ENCODE measurements at regions of chr15 and their contacts with region 1.

Region 1: DNA sequence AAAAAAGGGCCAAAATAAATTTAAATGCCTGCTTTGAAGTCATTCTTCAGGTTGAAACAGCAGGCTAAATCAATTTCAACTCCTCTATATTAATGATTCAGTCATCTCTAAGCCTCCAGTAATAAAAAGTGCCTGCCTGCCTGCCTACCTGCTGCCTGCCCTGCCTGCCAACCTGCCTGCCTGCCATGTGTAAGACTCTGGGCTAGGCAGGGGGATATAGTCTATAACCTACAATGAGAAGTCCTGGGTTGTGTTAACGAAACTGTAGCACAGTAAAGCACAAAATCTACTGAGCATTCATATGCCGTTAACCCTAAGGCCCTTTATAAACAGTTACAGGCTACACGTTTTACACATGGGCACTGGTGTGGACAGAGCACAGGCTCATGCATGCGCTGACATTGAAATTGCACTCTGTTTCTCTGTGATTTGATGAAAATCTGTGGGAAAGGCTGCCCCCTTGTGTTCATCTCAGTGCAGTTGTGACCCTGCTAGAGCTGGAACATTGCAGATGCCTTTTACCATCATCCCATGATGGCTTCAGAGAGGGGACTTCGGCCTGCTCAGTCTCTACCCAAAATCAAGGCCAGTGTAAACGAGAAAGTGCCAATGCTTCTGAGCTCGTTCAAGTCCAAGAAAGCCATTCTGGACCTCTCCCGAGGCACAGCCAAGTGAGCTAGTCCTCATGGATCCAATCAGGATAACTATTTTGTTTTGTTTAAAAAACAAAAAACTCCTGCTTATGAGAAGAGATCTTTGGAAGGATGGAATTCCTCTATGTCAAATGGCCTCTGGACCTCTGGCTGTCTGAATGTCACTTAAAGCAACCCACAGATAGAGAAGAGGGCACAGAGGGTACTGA is 64.6 kb downstream of the EFL1 start:
- DNase-seq: peak; percentile 1 to 65 (median 51)
- ATAC-seq: peak; percentile 62
- H3K4me3 ChIP-seq: no peak overlapping the region
- H3K4me3 Mint-ChIP-seq: no peak overlapping the region
- H3K27ac ChIP-seq: no peak overlapping the region
- H3K27ac Mint-ChIP-seq: no peak overlapping the region
- H3K4me1 ChIP-seq: no peaks in the 10 kb centered on the region
- H3K4me1 Mint-ChIP-seq: no peaks in the 10 kb centered on the region
- H3K27me3 ChIP-seq: no peaks in the 10 kb centered on the region
- H3K27me3 Mint-ChIP-seq: no peaks in the 10 kb centered on the region
- CTCF ChIP-seq: peak; percentile 62

Region 2: GRCh38 chr15:81106560-81106959 is 1091.4 kb before region 1 on chr15:
- CTCF ChIA-PET with region 1: no interaction called
- POLR2A ChIA-PET with region 1: no interaction called
- intact Hi-C with region 1: loop called in 1 of 2 experiments (anchors 10 kb)
- DNase-seq: peak in 5 of 9 experiments; percentile 32 to 67 (median 45)
- ATAC-seq: no peak
- H3K4me3 ChIP-seq: no peak overlapping the region
- H3K4me3 Mint-ChIP-seq: no peak overlapping the region
- H3K27ac ChIP-seq: no peak overlapping the region
- H3K27ac Mint-ChIP-seq: no peak overlapping the region
- H3K4me1 ChIP-seq: no peaks in the 10 kb centered on the region
- H3K4me1 Mint-ChIP-seq: no peaks in the 10 kb centered on the region
- H3K27me3 ChIP-seq: no peaks in the 10 kb centered on the region
- H3K27me3 Mint-ChIP-seq: peaks cover 23% of the 10 kb centered on the region
- CTCF ChIP-seq: peak; percentile 69

Region 3: GRCh38 chr15:81410318-81410753 is 787.6 kb before region 1 on chr15:
- CTCF ChIA-PET with region 1: interaction called, 4 read pairs
- POLR2A ChIA-PET with region 1: no interaction called
- intact Hi-C with region 1: loop called in 1 of 2 experiments (anchors 2 kb)
- DNase-seq: peak in 5 of 9 experiments; percentile 16 to 69 (median 52)
- ATAC-seq: peak; percentile 54
- H3K4me3 ChIP-seq: no peak overlapping the region
- H3K4me3 Mint-ChIP-seq: no peak overlapping the region
- H3K27ac ChIP-seq: no peak overlapping the region
- H3K27ac Mint-ChIP-seq: no peak overlapping the region
- H3K4me1 ChIP-seq: peaks cover 8% of the 10 kb centered on the region
- H3K4me1 Mint-ChIP-seq: peaks cover 12% of the 10 kb centered on the region
- H3K27me3 ChIP-seq: no peaks in the 10 kb centered on the region
- H3K27me3 Mint-ChIP-seq: peaks cover 11% of the 10 kb centered on the region
- CTCF ChIP-seq: peak; percentile 49

Region 4: GRCh38 chr15:81480645-81481053 is 717.3 kb before region 1 on chr15:
- CTCF ChIA-PET with region 1: interaction called, 5 read pairs
- POLR2A ChIA-PET with region 1: no interaction called
- intact Hi-C with region 1: loop called in 1 of 2 experiments (anchors 1 kb)
- DNase-seq: peak in 4 of 9 experiments; percentile 47 to 61 (median 54)
- ATAC-seq: peak; percentile 23
- H3K4me3 ChIP-seq: no peak overlapping the region
- H3K4me3 Mint-ChIP-seq: peak overlapping the region; percentile 42
- H3K27ac ChIP-seq: no peak overlapping the region
- H3K27ac Mint-ChIP-seq: no peak overlapping the region
- H3K4me1 ChIP-seq: no peaks in the 10 kb centered on the region
- H3K4me1 Mint-ChIP-seq: no peaks in the 10 kb centered on the region
- H3K27me3 ChIP-seq: no peaks in the 10 kb centered on the region
- H3K27me3 Mint-ChIP-seq: no peaks in the 10 kb centered on the region
- CTCF ChIP-seq: peak; percentile 86

Region 5: DNA sequence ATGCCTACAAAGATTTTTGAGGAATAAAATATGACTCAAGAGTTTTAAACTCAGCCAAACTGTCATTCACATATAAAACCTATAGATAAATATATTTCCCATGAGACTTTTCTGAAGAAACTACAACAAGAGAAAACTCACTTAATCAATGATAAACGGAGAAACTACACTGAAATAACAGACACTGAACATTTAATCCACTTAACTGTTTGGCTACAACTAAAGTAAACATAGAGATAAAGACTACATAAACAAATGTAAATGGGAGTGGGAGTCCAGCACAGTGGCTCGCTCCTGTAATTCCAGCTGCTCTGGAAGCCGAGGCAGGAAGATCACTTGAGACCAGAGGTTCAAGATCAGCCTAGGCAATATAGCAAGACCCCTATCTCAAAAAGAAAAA is 231.3 kb before region 1 on chr15:
- CTCF ChIA-PET with region 1: no interaction called
- POLR2A ChIA-PET with region 1: no interaction called
- intact Hi-C with region 1: no loop called
- DNase-seq: no peak
- ATAC-seq: no peak
- H3K4me3 ChIP-seq: no peak overlapping the region
- H3K4me3 Mint-ChIP-seq: no peak overlapping the region
- H3K27ac ChIP-seq: no peak overlapping the region
- H3K27ac Mint-ChIP-seq: no peak overlapping the region
- H3K4me1 ChIP-seq: no peaks in the 10 kb centered on the region
- H3K4me1 Mint-ChIP-seq: no peaks in the 10 kb centered on the region
- H3K27me3 ChIP-seq: no peaks in the 10 kb centered on the region
- H3K27me3 Mint-ChIP-seq: peaks cover 3% of the 10 kb centered on the region
- CTCF ChIP-seq: no peak

Region 6: GRCh38 chr15:82108489-82109078 is 89.4 kb before region 1 on chr15:
- CTCF ChIA-PET with region 1: interaction called, 5 read pairs
- POLR2A ChIA-PET with region 1: no interaction called
- intact Hi-C with region 1: loop called in 1 of 2 experiments (anchors 5 kb)
- DNase-seq: peak; percentile 40 to 78 (median 59)
- ATAC-seq: peak; percentile 89
- H3K4me3 ChIP-seq: no peak overlapping the region
- H3K4me3 Mint-ChIP-seq: no peak overlapping the region
- H3K27ac ChIP-seq: no peak overlapping the region
- H3K27ac Mint-ChIP-seq: no peak overlapping the region
- H3K4me1 ChIP-seq: no peaks in the 10 kb centered on the region
- H3K4me1 Mint-ChIP-seq: no peaks in the 10 kb centered on the region
- H3K27me3 ChIP-seq: no peaks in the 10 kb centered on the region
- H3K27me3 Mint-ChIP-seq: no peaks in the 10 kb centered on the region
- CTCF ChIP-seq: peak; percentile 66

Measured in CD8-positive, alpha-beta T cell (primary cell).